AG04449 (cell line): ENCODE measurements at regions of chr1 and their contacts with region 1.

Region 1: DNA sequence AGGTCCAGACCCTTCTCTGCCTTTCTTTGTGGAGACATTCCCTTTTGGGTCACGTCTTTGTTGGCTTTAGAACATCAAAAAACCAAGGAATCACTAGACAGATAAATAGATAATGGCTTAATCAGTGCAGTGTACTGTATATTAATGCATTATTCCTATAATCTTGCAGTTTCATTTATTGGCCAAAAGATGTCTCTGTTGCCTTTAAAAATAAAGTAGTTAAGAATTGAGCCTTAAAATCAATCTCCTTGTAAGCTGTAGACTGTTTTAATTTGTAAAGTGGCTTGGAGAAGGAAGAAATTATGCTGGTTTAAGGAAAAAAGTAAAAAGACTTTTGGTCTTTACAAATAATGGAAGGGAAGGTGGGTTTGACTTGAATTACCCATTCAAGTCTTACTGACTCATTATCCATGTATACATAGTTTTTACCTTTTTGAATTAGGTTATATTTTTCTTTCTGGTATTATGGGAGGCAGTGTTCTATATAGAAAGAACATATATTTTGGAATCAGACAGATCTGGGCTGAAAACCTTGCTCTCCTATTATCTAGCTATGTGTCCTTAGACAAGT is 84.6 kb downstream of the VPS13D start:
- DNase-seq: no peak
- H3K4me3 ChIP-seq: no peak overlapping the region
- CTCF ChIP-seq: no peak

Region 2: GRCh38 chr1:12161662-12162458 is 152.6 kb before region 1 on chr1:
- CTCF ChIA-PET with region 1: no interaction called
- POLR2A ChIA-PET with region 1: no interaction called
- DNase-seq: peak; percentile 45
- H3K4me3 ChIP-seq: no peak overlapping the region
- CTCF ChIP-seq: no peak

Region 3: DNA sequence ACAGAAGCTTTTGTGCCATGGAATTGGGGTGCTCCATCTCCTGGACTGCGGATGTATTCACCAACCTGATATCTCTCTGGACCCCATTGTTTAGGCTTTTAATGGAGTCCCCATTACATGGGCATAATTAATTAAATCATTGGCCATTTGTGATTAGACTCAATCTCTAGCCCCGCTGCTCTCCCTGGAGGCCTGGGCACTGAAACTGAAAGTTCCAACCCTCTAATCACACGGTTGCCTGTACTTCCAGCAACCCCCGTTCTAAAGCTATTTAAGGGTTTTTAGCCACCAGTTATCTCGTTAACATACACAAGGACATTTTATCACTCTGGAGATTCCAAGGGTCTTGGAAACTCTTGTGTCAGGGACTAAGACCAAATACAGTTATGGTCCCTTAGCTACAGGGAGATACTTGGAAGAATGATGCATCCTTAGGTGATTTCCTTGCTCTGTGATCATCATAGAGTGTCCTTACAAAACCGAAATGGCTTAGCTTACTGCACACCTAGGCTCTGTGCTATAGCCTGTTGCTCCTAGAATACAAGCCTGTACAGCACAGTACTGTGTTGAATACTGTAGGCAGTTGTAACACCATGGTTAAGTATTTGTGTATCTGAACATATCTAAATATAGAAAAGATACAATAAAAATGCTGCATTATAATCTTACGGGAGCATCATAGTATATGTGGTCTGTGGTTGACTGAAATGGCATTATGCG is 12.7 kb before region 1 on chr1:
- CTCF ChIA-PET with region 1: interaction called, 15 read pairs
- POLR2A ChIA-PET with region 1: no interaction called
- DNase-seq: no peak
- H3K4me3 ChIP-seq: no peak overlapping the region
- CTCF ChIP-seq: no peak

Region 4: DNA sequence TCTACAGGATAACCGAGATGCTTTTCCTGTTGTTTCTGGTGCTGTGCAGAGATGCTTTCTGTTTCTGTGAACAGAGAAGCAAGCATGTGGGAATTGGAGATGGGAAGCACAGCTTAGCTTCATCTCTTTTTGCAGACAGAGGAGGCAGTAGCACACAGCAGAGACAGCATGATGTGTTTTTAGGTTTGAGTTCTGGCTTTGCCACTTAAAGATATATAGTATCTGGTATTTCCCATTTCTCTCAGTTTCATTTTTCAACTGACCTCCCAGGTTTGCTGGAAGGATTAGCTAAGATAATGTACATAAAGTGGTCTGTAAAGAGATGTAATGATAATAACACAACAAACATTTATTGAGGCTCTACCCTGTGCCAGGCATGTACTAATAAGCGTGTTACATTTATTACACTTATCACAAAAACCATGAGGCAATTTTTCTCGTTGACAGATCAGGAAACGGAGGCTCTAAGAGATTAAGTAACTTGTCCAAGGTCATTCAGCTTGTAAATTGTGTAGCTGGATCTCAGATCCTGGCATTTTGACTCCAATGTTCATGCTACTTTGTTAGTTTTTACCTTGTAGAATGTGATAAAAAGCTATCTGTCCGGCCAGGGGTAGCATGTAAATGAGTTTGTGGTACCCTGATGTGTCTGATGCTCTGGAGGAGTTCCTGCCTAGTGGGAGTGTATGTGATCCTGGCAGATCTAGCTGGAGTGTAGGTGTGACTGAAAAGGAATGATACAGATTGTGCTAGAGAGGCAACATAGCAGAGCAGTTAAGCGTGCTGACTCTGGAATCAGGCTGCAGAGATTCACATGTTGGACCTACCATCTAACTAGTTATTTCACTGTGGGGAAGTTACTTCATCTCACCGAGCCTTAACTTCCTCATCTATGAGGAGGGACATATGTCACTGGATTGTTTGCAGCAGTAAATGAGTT is 62.0 kb after region 1 on chr1:
- CTCF ChIA-PET with region 1: no interaction called
- POLR2A ChIA-PET with region 1: no interaction called
- DNase-seq: no peak
- H3K4me3 ChIP-seq: no peak overlapping the region
- CTCF ChIP-seq: no peak